Activated T-helper 2 cell treated with anti-CD3 and anti-CD28 coated beads, Interferon-gamma antibody, Interleukin-2, Interleukin-4, amounts not matched to agents 10 μg/mL and 5 μg/mL and 100 μg/mL, durations not matched to agents 14 hours and 24 hours and 36 hours (primary cell): ENCODE measurements at regions of chr7 and their contacts with region 1.

Region 1: GRCh38 chr7:155738652-155739537 is 73.4 kb downstream of the SHH start:
- DNase-seq: peak; percentile 46
- H3K4me3 Mint-ChIP-seq: peak overlapping the region; percentile 51
- H3K27ac Mint-ChIP-seq: peak overlapping the region; percentile 78
- H3K4me1 Mint-ChIP-seq: peaks cover 74% of the 10 kb centered on the region
- H3K27me3 Mint-ChIP-seq: no peaks in the 10 kb centered on the region

Region 2: GRCh38 chr7:155398944-155399343 is 340.0 kb before region 1 on chr7:
- intact Hi-C with region 1: no loop called
- DNase-seq: no peak
- H3K4me3 Mint-ChIP-seq: no peak overlapping the region
- H3K27ac Mint-ChIP-seq: no peak overlapping the region
- H3K4me1 Mint-ChIP-seq: no peaks in the 10 kb centered on the region
- H3K27me3 Mint-ChIP-seq: no peaks in the 10 kb centered on the region

Region 3: DNA sequence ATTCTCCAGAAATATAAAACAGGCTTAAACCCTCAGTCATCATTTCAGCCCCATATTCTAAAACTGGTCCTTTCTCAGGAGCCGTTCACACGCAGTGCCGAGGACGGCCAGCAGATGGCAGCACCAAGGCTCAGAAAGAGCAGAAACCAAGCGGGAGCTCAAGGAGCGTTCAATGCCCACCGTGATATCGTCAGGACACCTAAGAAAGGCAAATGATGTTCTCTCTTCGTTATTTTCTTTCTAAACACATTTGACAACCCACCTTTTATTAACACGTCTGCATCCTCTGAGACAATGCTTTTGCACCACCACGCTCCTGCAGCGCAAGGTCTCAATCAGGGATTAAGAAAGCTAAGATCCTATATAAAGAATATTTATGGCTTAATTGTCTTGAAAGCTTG is 140.1 kb before region 1 on chr7:
- intact Hi-C with region 1: loop called (anchors 1 kb)
- DNase-seq: peak; percentile 72
- H3K4me3 Mint-ChIP-seq: no peak overlapping the region
- H3K27ac Mint-ChIP-seq: no peak overlapping the region
- H3K4me1 Mint-ChIP-seq: peaks cover 10% of the 10 kb centered on the region
- H3K27me3 Mint-ChIP-seq: peaks cover 32% of the 10 kb centered on the region

Region 4: DNA sequence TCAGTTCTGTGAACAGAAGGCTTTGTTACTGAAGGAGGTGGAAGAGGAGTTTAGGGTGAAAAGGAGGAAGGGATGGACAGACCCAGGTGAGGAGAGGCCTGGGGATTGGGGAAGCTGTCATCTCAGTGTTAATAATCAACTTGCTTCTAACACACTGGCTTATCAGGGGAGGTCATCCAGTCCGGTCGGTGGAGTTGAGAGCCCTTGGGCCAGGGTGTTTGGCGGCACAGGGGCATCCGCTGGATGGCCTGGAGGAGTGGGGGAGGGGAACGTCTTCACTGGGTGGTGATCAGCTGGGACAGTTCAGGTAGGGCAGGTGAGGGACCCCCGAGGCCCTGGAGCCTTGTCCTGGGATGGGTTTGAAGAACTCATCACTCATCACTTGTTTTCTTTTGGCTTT is 39.5 kb after region 1 on chr7:
- intact Hi-C with region 1: no loop called
- DNase-seq: no peak
- H3K4me3 Mint-ChIP-seq: no peak overlapping the region
- H3K27ac Mint-ChIP-seq: no peak overlapping the region
- H3K4me1 Mint-ChIP-seq: peaks cover 3% of the 10 kb centered on the region
- H3K27me3 Mint-ChIP-seq: no peaks in the 10 kb centered on the region